ENCODE measurements at regions of chr1 and their contacts with region 1.

Region 1: DNA sequence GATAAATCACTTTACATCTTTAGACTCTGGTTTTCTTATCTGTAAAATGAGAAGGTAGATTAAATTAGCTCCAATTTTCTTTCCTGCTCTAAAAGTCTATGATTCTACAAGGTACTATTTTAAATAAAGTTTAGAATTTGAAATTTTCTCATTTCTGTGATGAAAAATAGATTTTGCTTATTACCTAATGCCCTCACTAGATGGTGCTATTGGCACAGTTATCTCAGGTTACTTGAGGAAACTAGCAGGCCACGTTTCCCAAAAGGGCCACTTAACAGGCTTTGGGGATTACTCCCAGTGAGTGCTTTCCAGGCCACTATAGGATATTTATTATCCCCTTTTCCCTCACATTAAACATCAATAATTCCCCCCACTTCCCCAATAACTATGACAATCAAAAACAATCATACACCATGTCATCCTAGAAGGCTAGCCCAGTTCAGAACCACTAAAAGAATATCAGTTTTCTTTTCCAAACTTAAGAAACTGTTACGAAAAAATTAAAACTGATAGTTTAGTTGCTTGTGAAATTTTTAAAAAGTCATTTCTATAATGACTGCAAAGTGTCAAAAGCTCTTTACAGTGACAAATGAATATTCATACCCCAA is 30.6 kb downstream of the OMA1 start:
- DNase-seq: peak; percentile 76
- ATAC-seq: peak; percentile 51
- H3K4me3 ChIP-seq: no peak overlapping the region
- H3K4me3 Mint-ChIP-seq: no peak overlapping the region
- H3K27ac ChIP-seq: peak overlapping the region in 1 of 2 donors; percentile 9
- H3K27ac Mint-ChIP-seq: peak overlapping the region; percentile 46
- H3K4me1 ChIP-seq: no peaks in the 10 kb centered on the region
- H3K4me1 Mint-ChIP-seq: no peaks in the 10 kb centered on the region
- H3K27me3 ChIP-seq: no peaks in the 10 kb centered on the region
- H3K27me3 Mint-ChIP-seq: no peaks in the 10 kb centered on the region
- CTCF ChIP-seq: peak; percentile 90

Region 2: GRCh38 chr1:58380345-58380744 is 135.6 kb before region 1 on chr1:
- CTCF ChIA-PET with region 1: no interaction called
- POLR2A ChIA-PET with region 1: no interaction called
- intact Hi-C with region 1: no loop called
- DNase-seq: no peak
- ATAC-seq: no peak
- H3K4me3 ChIP-seq: no peak overlapping the region
- H3K4me3 Mint-ChIP-seq: no peak overlapping the region
- H3K27ac ChIP-seq: no peak overlapping the region
- H3K27ac Mint-ChIP-seq: no peak overlapping the region
- H3K4me1 ChIP-seq: no peaks in the 10 kb centered on the region
- H3K4me1 Mint-ChIP-seq: no peaks in the 10 kb centered on the region
- H3K27me3 ChIP-seq: no peaks in the 10 kb centered on the region
- H3K27me3 Mint-ChIP-seq: no peaks in the 10 kb centered on the region
- CTCF ChIP-seq: no peak

Region 3: GRCh38 chr1:58477390-58477789 is 38.5 kb before region 1 on chr1:
- CTCF ChIA-PET with region 1: no interaction called
- POLR2A ChIA-PET with region 1: no interaction called
- intact Hi-C with region 1: no loop called
- DNase-seq: no peak
- ATAC-seq: no peak
- H3K4me3 ChIP-seq: no peak overlapping the region
- H3K4me3 Mint-ChIP-seq: no peak overlapping the region
- H3K27ac ChIP-seq: no peak overlapping the region
- H3K27ac Mint-ChIP-seq: no peak overlapping the region
- H3K4me1 ChIP-seq: no peaks in the 10 kb centered on the region
- H3K4me1 Mint-ChIP-seq: no peaks in the 10 kb centered on the region
- H3K27me3 ChIP-seq: no peaks in the 10 kb centered on the region
- H3K27me3 Mint-ChIP-seq: no peaks in the 10 kb centered on the region
- CTCF ChIP-seq: no peak

Region 4: DNA sequence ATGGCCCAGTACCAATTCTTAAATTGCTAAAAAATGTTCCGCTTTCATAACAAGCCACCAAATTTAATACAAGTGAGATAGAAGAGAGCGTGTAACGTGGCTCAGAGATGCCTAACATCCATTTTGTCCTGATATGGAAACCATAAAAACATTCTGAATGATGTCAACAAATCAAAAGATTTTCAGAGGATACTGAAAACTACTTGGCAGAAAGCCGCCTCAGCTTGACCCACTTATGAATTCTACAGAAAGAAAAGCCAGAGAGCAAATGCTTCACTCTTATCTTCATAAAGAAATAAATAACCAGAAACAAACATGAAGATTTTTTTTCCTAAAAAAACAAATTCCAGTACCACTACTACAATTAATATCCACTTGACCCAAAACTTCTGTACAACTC is 10.6 kb before region 1 on chr1:
- CTCF ChIA-PET with region 1: interaction called, 18 read pairs
- POLR2A ChIA-PET with region 1: no interaction called
- intact Hi-C with region 1: no loop called
- DNase-seq: no peak
- ATAC-seq: no peak
- H3K4me3 ChIP-seq: no peak overlapping the region
- H3K4me3 Mint-ChIP-seq: no peak overlapping the region
- H3K27ac ChIP-seq: no peak overlapping the region
- H3K27ac Mint-ChIP-seq: no peak overlapping the region
- H3K4me1 ChIP-seq: no peaks in the 10 kb centered on the region
- H3K4me1 Mint-ChIP-seq: no peaks in the 10 kb centered on the region
- H3K27me3 ChIP-seq: no peaks in the 10 kb centered on the region
- H3K27me3 Mint-ChIP-seq: no peaks in the 10 kb centered on the region
- CTCF ChIP-seq: no peak

Region 5: GRCh38 chr1:58539553-58539952 is 23.7 kb after region 1 on chr1:
- CTCF ChIA-PET with region 1: interaction called, 103 read pairs
- POLR2A ChIA-PET with region 1: no interaction called
- intact Hi-C with region 1: no loop called
- DNase-seq: no peak
- ATAC-seq: no peak
- H3K4me3 ChIP-seq: no peak overlapping the region
- H3K4me3 Mint-ChIP-seq: no peak overlapping the region
- H3K27ac ChIP-seq: no peak overlapping the region
- H3K27ac Mint-ChIP-seq: no peak overlapping the region
- H3K4me1 ChIP-seq: no peaks in the 10 kb centered on the region
- H3K4me1 Mint-ChIP-seq: peaks cover 2% of the 10 kb centered on the region
- H3K27me3 ChIP-seq: no peaks in the 10 kb centered on the region
- H3K27me3 Mint-ChIP-seq: no peaks in the 10 kb centered on the region
- CTCF ChIP-seq: no peak

Region 6: GRCh38 chr1:58607391-58607790 is 91.5 kb after region 1 on chr1:
- CTCF ChIA-PET with region 1: no interaction called
- POLR2A ChIA-PET with region 1: no interaction called
- intact Hi-C with region 1: no loop called
- DNase-seq: no peak
- ATAC-seq: no peak
- H3K4me3 ChIP-seq: no peak overlapping the region
- H3K4me3 Mint-ChIP-seq: no peak overlapping the region
- H3K27ac ChIP-seq: no peak overlapping the region
- H3K27ac Mint-ChIP-seq: no peak overlapping the region
- H3K4me1 ChIP-seq: no peaks in the 10 kb centered on the region
- H3K4me1 Mint-ChIP-seq: no peaks in the 10 kb centered on the region
- H3K27me3 ChIP-seq: peaks cover 0 to 5% (median 0%) of the 10 kb centered on the region in 4 experiments
- H3K27me3 Mint-ChIP-seq: peaks cover 38% of the 10 kb centered on the region
- CTCF ChIP-seq: no peak

Region 7: GRCh38 chr1:58768971-58769808 is 253.3 kb after region 1 on chr1:
- CTCF ChIA-PET with region 1: no interaction called
- POLR2A ChIA-PET with region 1: no interaction called
- intact Hi-C with region 1: no loop called
- DNase-seq: peak; percentile 30
- ATAC-seq: no peak
- H3K4me3 ChIP-seq: no peak overlapping the region
- H3K4me3 Mint-ChIP-seq: no peak overlapping the region
- H3K27ac ChIP-seq: no peak overlapping the region
- H3K27ac Mint-ChIP-seq: no peak overlapping the region
- H3K4me1 ChIP-seq: peaks cover 13 to 14% of the 10 kb centered on the region in 2 donors
- H3K4me1 Mint-ChIP-seq: peaks cover 17% of the 10 kb centered on the region
- H3K27me3 ChIP-seq: peaks cover 0 to 5% (median 0%) of the 10 kb centered on the region in 4 experiments
- H3K27me3 Mint-ChIP-seq: peaks cover 20% of the 10 kb centered on the region
- CTCF ChIP-seq: peak; percentile 70

Measured in B cell (primary cell).